ENCODE measurements at regions of chr7 and their contacts with region 1.

Region 1: GRCh38 chr7:191981-192649 is at the start of gene FAM20C:
- DNase-seq: peak; percentile 82 to 85 (median 82)
- H3K4me3 ChIP-seq: peak within 1 kb of the TSS; percentile 56 to 91 (median 86)
- H3K4me3 Mint-ChIP-seq: peak within 1 kb of the TSS; percentile 97
- H3K27ac ChIP-seq: peak within 1 kb of the TSS in 1 of 2 donors; percentile 68
- H3K27ac Mint-ChIP-seq: peak within 1 kb of the TSS in 6 of 7 donors; percentile 45 to 96 (median 84)
- H3K4me1 ChIP-seq: peaks cover 24 to 43% of the 10 kb centered on the region in 2 donors
- H3K4me1 Mint-ChIP-seq: peaks cover 40% of the 10 kb centered on the region
- H3K27me3 ChIP-seq: peaks cover 0 to 18% of the 10 kb centered on the region in 2 donors
- H3K27me3 Mint-ChIP-seq: peaks cover 10 to 35% (median 20%) of the 10 kb centered on the region in 3 donors
- CTCF ChIP-seq: no peak
- polyA plus RNA-seq, gene FAM20C: 1.2 to 32.2 (median 1.5) TPM

Region 2: GRCh38 chr7:149856-150636 is 42.1 kb before region 1 on chr7:
- intact Hi-C with region 1: loop called (anchors 5 kb)
- DNase-seq: peak; percentile 50 to 84 (median 74)
- H3K4me3 ChIP-seq: peak overlapping the region; percentile 36 to 82 (median 50)
- H3K4me3 Mint-ChIP-seq: peak overlapping the region; percentile 80 to 89
- H3K27ac ChIP-seq: peak overlapping the region; percentile 94 to 96
- H3K27ac Mint-ChIP-seq: peak overlapping the region; percentile 97 to 100 (median 98)
- H3K4me1 ChIP-seq: peaks cover 32 to 37% of the 10 kb centered on the region in 2 donors
- H3K4me1 Mint-ChIP-seq: peaks cover 36% of the 10 kb centered on the region
- H3K27me3 ChIP-seq: no peaks in the 10 kb centered on the region
- H3K27me3 Mint-ChIP-seq: no peaks in the 10 kb centered on the region
- CTCF ChIP-seq: no peak